Tibial artery (tissue), 4 donors: ENCODE measurements at regions of chr7 and their contacts with region 1.

Region 1: DNA sequence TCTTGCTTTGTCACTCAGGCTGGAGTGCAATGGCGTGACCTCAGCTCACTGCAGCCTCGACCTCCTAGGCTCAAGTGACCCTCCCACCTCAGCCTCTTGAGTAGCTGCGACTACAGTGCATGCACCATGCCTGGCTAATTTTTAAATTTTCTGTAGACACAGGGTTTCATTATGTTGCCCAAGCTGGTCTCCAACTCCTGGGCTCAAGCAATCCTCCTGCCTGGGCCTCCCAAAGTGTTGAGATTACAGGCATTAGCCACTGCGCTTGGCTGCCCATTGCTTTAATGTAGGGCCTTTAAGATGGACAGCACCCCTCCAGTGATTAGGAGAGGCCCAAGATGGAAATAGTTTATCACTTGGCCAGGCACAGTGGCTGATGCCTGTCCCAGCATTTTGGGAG is 39.4 kb downstream of the NIPSNAP2 start:
- DNase-seq: no peak
- H3K4me3 ChIP-seq: no peak overlapping the region
- H3K27ac ChIP-seq: no peak overlapping the region
- H3K4me1 ChIP-seq: no peaks in the 10 kb centered on the region
- H3K27me3 ChIP-seq: no peaks in the 10 kb centered on the region
- CTCF ChIP-seq: no peak

Region 2: DNA sequence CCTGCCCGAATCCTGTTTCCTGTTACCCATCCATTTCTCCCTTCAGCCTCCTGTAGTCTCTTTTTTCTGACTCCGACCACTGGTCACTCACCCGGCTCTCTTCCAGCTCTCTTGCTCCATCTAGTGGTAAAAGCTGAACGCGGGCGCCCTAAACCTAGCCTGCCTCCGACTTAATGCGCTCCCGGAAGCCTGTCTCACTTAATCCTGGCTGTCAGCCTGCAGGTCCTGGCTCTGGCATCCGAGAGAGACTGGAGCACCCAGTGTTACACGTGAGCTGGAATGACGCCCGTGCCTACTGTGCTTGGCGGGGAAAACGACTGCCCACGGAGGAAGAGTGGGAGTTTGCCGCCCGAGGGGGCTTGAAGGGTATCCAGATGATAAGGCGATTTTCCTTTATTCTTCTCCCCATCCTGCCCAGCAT is 70.6 kb after region 1 on chr7:
- intact Hi-C with region 1: loop called (anchors 5 kb)
- DNase-seq: peak; percentile 82 to 95
- H3K4me3 ChIP-seq: no peak overlapping the region
- H3K27ac ChIP-seq: peak overlapping the region; percentile 59 to 66
- H3K4me1 ChIP-seq: peaks cover 0 to 26% (median 19%) of the 10 kb centered on the region in 4 donors
- H3K27me3 ChIP-seq: no peaks in the 10 kb centered on the region
- CTCF ChIP-seq: peak; percentile 86 to 91